ENCODE measurements at regions of chr10 and their contacts with region 1.

Region 1: GRCh38 chr10:4767033-4767814 is 58.8 kb upstream of the AKR1E2 start:
- DNase-seq: no peak
- H3K4me3 ChIP-seq: no peak overlapping the region
- H3K27ac ChIP-seq: peak overlapping the region in 3 of 4 donors; percentile 6 to 49 (median 20)
- H3K4me1 ChIP-seq: peaks cover 28 to 40% (median 30%) of the 10 kb centered on the region in 4 donors
- H3K27me3 ChIP-seq: no peaks in the 10 kb centered on the region
- CTCF ChIP-seq: peak; percentile 76 to 85 (median 82)
- EP300 ChIP-seq: no peak
- POLR2A ChIP-seq: no peak

Region 2: DNA sequence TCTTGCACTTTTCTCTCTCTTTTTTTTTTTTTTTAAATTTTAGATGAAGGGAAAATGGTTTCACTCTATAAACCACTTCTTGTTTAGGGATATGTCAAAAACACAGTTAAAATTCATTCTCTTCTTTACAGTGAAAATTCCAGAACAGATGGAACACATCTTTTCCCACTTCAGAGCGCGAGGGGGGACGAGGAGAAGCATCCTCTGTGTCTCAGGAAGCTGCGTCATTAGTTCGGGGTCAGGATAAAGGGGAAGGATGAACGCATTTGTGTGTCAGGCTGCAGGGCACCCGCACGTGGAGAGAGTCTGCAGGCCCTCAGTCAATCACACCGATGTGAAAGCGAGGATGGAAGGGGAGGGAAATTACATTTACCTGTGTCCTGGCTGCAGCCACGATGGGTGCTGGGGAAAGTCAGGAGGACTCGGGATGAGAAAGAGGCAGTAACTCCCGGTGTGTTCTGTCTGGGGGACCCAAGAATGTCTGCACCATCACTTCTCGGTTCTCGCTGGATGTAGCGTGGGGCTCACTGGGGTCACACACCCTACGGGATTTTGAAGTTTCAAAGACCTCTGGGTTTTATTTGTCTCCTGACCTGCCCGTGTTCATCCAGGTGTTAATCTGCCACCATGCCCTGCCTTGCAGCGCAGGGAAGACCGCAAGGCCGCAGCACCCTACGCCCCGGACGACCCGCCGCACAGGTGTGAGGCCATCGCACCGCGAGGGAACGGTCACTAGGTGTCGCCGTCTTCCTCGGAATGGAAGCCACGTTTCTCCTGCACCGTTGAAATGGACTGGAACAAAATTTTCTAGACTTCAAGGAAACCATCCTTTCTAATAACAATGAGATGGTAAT is 1527.9 kb before region 1 on chr10:
- intact Hi-C with region 1: loop called (anchors 5 kb)
- DNase-seq: no peak
- H3K4me3 ChIP-seq: peak overlapping the region in 2 of 4 donors; percentile 3 to 18
- H3K27ac ChIP-seq: peak overlapping the region in 2 of 4 donors; percentile 60 to 63
- H3K4me1 ChIP-seq: peaks cover 6 to 11% (median 8%) of the 10 kb centered on the region in 4 donors
- H3K27me3 ChIP-seq: no peaks in the 10 kb centered on the region
- CTCF ChIP-seq: peak; percentile 88 to 95 (median 92)
- EP300 ChIP-seq: no peak
- POLR2A ChIP-seq: no peak

Region 3: GRCh38 chr10:4234661-4235060 is 532.6 kb before region 1 on chr10:
- intact Hi-C with region 1: loop called (anchors 10 kb)
- DNase-seq: no peak
- H3K4me3 ChIP-seq: no peak overlapping the region
- H3K27ac ChIP-seq: no peak overlapping the region
- H3K4me1 ChIP-seq: peaks cover 0 to 18% (median 6%) of the 10 kb centered on the region in 4 donors
- H3K27me3 ChIP-seq: no peaks in the 10 kb centered on the region
- CTCF ChIP-seq: no peak
- EP300 ChIP-seq: no peak
- POLR2A ChIP-seq: no peak

Region 4: DNA sequence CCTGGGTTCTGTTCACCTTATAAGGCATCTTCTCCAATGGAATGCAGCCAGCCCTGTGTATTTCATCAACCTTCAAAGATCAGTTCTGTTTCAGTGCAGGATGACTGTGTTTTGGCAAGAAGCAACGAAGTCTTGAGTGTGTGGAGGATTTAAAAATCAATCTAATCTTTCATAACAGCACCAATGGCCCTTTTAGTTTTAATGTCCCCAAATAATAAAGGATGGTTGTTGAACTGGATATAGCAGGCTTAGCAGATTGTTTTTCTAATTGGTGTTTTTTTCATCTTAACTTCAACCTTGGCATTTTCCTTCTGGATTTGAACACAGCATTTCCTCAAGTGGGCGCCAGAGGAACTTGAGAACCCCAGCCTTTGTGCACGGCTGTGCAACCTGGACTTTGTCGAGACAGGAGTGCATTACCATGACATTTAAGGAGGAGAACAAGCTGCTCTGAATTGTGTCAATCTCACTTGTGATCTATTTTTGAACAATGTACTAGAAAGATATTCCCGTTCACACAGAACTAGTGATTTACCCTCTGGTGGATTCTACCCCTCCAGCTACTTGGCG is 254.5 kb before region 1 on chr10:
- intact Hi-C with region 1: loop called (anchors 5 kb)
- DNase-seq: no peak
- H3K4me3 ChIP-seq: no peak overlapping the region
- H3K27ac ChIP-seq: peak overlapping the region; percentile 21 to 65 (median 58)
- H3K4me1 ChIP-seq: peaks cover 20 to 36% (median 30%) of the 10 kb centered on the region in 4 donors
- H3K27me3 ChIP-seq: no peaks in the 10 kb centered on the region
- CTCF ChIP-seq: peak; percentile 58 to 71 (median 70)
- EP300 ChIP-seq: no peak
- POLR2A ChIP-seq: no peak

Region 5: DNA sequence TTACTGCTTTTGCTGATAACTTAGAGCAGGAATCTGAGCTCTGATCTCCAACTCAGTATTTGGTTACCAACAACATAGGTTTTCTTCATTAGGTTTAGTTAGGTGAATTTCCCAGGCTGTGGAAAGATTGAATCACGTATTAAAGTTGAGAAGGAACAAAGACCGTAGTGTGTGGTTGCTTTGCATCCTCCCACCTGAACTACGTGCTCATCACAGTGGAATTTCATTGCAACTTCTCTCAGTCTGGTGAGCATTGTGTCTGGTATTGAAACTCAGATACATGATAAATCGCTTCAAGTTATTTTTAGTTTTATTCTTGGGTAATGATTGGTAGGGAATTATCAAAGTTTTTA is 80.6 kb before region 1 on chr10:
- intact Hi-C with region 1: loop called (anchors 5 kb)
- DNase-seq: no peak
- H3K4me3 ChIP-seq: no peak overlapping the region
- H3K27ac ChIP-seq: no peak overlapping the region
- H3K4me1 ChIP-seq: peaks cover 4 to 23% (median 14%) of the 10 kb centered on the region in 4 donors
- H3K27me3 ChIP-seq: no peaks in the 10 kb centered on the region
- CTCF ChIP-seq: no peak
- EP300 ChIP-seq: no peak
- POLR2A ChIP-seq: no peak

Region 6: DNA sequence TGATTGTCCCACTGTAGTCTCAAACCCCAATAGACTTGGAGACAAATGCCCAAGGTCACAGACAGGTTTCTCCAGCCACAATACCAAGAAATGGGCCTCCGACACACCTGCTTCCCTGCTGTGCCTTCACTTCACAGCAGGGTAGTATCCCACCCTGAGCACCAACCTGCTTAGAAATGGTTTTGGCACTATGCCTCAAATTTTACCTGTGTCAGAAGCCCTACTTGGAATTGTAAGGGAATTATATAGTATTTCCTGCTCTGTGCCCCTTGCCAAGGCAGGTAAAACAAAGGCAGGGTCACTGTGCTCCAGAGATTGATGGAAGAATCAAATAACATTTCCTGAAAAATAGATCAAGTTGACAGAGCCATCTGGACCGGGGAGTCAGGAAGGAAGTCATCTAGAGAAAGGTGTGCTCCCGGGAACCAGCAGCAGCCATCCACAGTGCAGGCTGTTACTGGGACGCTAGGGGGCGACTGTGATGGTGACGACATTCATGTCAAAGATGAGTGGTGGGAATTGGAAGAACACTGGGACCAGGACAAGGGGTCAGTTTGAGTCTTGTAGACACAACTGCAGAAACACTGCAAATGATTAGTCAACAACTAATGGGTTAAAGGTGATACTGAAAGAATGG is 59.0 kb before region 1 on chr10:
- intact Hi-C with region 1: no loop called
- DNase-seq: no peak
- H3K4me3 ChIP-seq: no peak overlapping the region
- H3K27ac ChIP-seq: no peak overlapping the region
- H3K4me1 ChIP-seq: no peaks in the 10 kb centered on the region
- H3K27me3 ChIP-seq: no peaks in the 10 kb centered on the region
- CTCF ChIP-seq: peak in 1 of 3 experiments; percentile 5
- EP300 ChIP-seq: no peak
- POLR2A ChIP-seq: no peak